MCF 10A (cell line): ENCODE measurements at regions of chr1 and their contacts with region 1.

Region 1: GRCh38 chr1:203776636-203777035 is 11.7 kb downstream of the LAX1 start:
- DNase-seq: peak; percentile 42
- H3K4me3 Mint-ChIP-seq: no peak overlapping the region
- H3K27ac Mint-ChIP-seq: no peak overlapping the region
- H3K4me1 Mint-ChIP-seq: no peaks in the 10 kb centered on the region
- H3K27me3 Mint-ChIP-seq: no peaks in the 10 kb centered on the region
- CTCF ChIP-seq: peak; percentile 26

Region 2: GRCh38 chr1:203536981-203537455 is 239.6 kb before region 1 on chr1:
- CTCF ChIA-PET with region 1: no interaction called
- POLR2A ChIA-PET with region 1: no interaction called
- intact Hi-C with region 1: no loop called
- DNase-seq: peak; percentile 97
- H3K4me3 Mint-ChIP-seq: peak overlapping the region; percentile 0
- H3K27ac Mint-ChIP-seq: peak overlapping the region; percentile 10
- H3K4me1 Mint-ChIP-seq: peaks cover 36% of the 10 kb centered on the region
- H3K27me3 Mint-ChIP-seq: no peaks in the 10 kb centered on the region
- CTCF ChIP-seq: no peak

Region 3: GRCh38 chr1:203789956-203790355 is 13.3 kb after region 1 on chr1:
- CTCF ChIA-PET with region 1: interaction called, 21 read pairs
- POLR2A ChIA-PET with region 1: interaction called, 19 read pairs
- intact Hi-C with region 1: no loop called
- DNase-seq: no peak
- H3K4me3 Mint-ChIP-seq: no peak overlapping the region
- H3K27ac Mint-ChIP-seq: no peak overlapping the region
- H3K4me1 Mint-ChIP-seq: peaks cover 4% of the 10 kb centered on the region
- H3K27me3 Mint-ChIP-seq: no peaks in the 10 kb centered on the region
- CTCF ChIP-seq: no peak

Region 4: GRCh38 chr1:203843435-203843834 is 66.8 kb after region 1 on chr1:
- CTCF ChIA-PET with region 1: no interaction called
- POLR2A ChIA-PET with region 1: no interaction called
- intact Hi-C with region 1: no loop called
- DNase-seq: no peak
- H3K4me3 Mint-ChIP-seq: no peak overlapping the region
- H3K27ac Mint-ChIP-seq: no peak overlapping the region
- H3K4me1 Mint-ChIP-seq: peaks cover 6% of the 10 kb centered on the region
- H3K27me3 Mint-ChIP-seq: no peaks in the 10 kb centered on the region
- CTCF ChIP-seq: no peak